GM12878 (cell line): ENCODE measurements at regions of chr12 and their contacts with region 1.

Region 1: GRCh38 chr12:6937481-6938297 is 5.9 kb upstream of the RNU7-1 start:
- DNase-seq: peak; percentile 90
- ATAC-seq: peak; percentile 96
- H3K4me3 ChIP-seq: peak overlapping the region; percentile 86
- H3K27ac ChIP-seq: peak overlapping the region; percentile 92
- H3K4me1 ChIP-seq: peaks cover 11% of the 10 kb centered on the region; the same call in 1 of the 2 replicates
- H3K27me3 ChIP-seq: no peaks in the 10 kb centered on the region
- CTCF ChIP-seq: peak; percentile 96 to 99 (median 97)
- EP300 ChIP-seq: no peak
- POLR2A ChIP-seq: peak; percentile 87
- RAD21 ChIP-seq: peak; percentile 35

Region 2: DNA sequence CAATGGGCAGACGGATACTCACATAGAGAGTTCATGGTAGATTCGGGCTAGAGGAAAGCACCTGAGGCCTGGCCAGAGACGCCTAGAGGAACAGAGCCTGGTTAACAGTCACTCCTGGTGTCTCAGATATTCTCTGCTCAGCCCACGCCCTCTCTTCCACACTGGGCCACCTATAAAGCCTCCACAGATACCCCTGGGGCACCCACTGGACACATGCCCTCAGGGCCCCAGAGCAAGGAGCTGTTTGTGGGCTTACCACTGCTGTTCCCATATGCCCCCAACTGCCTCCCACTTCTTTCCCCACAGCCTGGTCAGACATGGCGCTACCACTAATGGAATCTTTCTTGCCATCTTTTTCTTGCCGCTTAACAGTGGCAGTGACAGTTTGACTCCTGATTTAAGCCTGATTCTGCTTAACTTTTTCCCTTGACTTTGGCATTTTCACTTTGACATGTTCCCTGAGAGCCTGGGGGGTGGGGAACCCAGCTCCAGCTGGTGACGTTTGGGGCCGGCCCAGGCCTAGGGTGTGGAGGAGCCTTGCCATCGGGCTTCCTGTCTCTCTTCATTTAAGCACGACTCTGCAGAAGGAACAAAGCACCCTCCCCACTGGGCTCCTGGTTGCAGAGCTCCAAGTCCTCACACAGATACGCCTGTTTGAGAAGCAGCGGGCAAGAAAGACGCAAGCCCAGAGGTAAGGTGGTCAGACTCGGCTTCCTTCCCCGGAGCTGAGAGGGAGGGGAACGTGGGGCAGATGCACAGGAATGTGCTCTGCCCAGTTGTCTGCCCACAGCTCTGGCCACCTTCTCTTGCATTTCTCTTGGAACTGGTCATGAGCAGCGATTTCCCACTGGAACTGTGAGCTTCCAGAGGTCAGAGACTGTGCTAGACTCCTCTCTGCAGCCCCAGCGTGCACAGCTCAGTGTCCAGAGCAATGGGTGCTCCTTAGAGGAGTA is 148.4 kb before region 1 on chr12 and contains the start of gene CD4:
- CTCF ChIA-PET with region 1: no interaction called
- POLR2A ChIA-PET with region 1: no interaction called
- RAD21 ChIA-PET with region 1: no interaction called
- SMC1A ChIA-PET with region 1: no interaction called
- in situ Hi-C with region 1: no loop called
- intact Hi-C with region 1: no loop called
- DNase-seq: no peak
- ATAC-seq: no peak
- H3K4me3 ChIP-seq: no peak within 1 kb of the TSS
- H3K27ac ChIP-seq: no peak within 1 kb of the TSS
- H3K4me1 ChIP-seq: peaks cover 18% of the 10 kb centered on the region
- H3K27me3 ChIP-seq: no peaks in the 10 kb centered on the region
- CTCF ChIP-seq: no peak
- EP300 ChIP-seq: no peak
- POLR2A ChIP-seq: no peak
- RAD21 ChIP-seq: no peak
- polyA plus RNA-seq, gene CD4: 0.49 to 0.85 TPM

Region 3: GRCh38 chr12:6807170-6807569 is 130.5 kb before region 1 on chr12:
- CTCF ChIA-PET with region 1: no interaction called
- POLR2A ChIA-PET with region 1: no interaction called
- RAD21 ChIA-PET with region 1: no interaction called
- SMC1A ChIA-PET with region 1: no interaction called
- in situ Hi-C with region 1: no loop called
- intact Hi-C with region 1: no loop called
- DNase-seq: no peak
- ATAC-seq: no peak
- H3K4me3 ChIP-seq: no peak overlapping the region
- H3K27ac ChIP-seq: no peak overlapping the region
- H3K4me1 ChIP-seq: no peaks in the 10 kb centered on the region
- H3K27me3 ChIP-seq: no peaks in the 10 kb centered on the region
- CTCF ChIP-seq: no peak
- EP300 ChIP-seq: no peak
- POLR2A ChIP-seq: no peak
- RAD21 ChIP-seq: no peak

Region 4: GRCh38 chr12:6959058-6959804 is 21.5 kb after region 1 on chr12:
- CTCF ChIA-PET with region 1: interaction called, 645 read pairs
- POLR2A ChIA-PET with region 1: interaction called, 524 read pairs
- RAD21 ChIA-PET with region 1: interaction called, 5 read pairs
- SMC1A ChIA-PET with region 1: interaction called, 395 read pairs
- in situ Hi-C with region 1: no loop called
- intact Hi-C with region 1: no loop called
- DNase-seq: no peak
- ATAC-seq: peak; percentile 66
- H3K4me3 ChIP-seq: peak overlapping the region; percentile 95
- H3K27ac ChIP-seq: peak overlapping the region; percentile 99
- H3K4me1 ChIP-seq: peaks cover 82% of the 10 kb centered on the region
- H3K27me3 ChIP-seq: no peaks in the 10 kb centered on the region
- CTCF ChIP-seq: no peak
- EP300 ChIP-seq: peak; percentile 73 to 80; a peak in 3 of 4 replicates
- POLR2A ChIP-seq: no peak
- RAD21 ChIP-seq: peak; percentile 15; the same call in 1 of the 2 replicates